ENCODE measurements at regions of chr3 and their contacts with region 1.

Region 1: DNA sequence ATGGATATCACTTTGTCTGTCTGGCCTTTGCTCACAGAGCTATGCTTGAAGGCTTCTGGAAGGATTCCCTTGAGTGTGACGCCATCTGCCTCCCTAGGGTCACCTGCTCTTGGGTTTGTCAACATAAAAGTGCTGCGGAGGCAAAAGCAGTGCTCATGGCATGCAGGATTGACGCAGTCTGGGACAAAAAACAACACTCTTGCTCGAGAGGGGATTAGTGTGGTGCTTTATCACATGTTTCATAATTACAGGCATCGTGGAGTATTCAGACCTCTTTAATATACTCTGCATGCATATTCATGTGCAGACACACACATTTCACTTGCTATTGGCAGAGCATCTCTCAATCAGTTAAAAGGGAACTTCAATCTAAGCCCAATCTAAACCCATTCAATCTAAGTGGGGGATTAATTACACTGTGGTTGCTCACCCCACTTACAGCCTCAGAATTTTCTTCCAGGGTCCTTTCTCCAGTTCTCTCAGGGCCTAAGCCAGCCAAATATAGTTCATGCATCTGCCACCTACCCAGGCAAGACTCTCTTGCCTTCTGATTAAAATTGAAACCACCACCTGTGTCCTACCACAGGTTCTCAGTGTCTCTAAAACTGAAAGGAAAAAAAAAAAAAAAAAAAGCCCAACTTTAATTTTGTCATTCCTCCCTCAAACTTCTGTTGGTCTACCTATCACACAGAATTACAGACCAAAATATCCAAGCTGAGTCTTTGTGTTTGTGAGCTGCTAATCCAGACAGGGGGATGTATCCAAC is 75.6 kb downstream of the BFSP2 start:
- DNase-seq: peak; percentile 37
- H3K4me3 Mint-ChIP-seq: peak overlapping the region; percentile 4
- H3K27ac Mint-ChIP-seq: peak overlapping the region; percentile 34
- H3K4me1 Mint-ChIP-seq: peaks cover 53% of the 10 kb centered on the region
- H3K27me3 Mint-ChIP-seq: no peaks in the 10 kb centered on the region

Region 2: GRCh38 chr3:133464573-133464972 is 10.9 kb before region 1 on chr3:
- intact Hi-C with region 1: loop called (anchors 2 kb)
- DNase-seq: no peak
- H3K4me3 Mint-ChIP-seq: no peak overlapping the region
- H3K27ac Mint-ChIP-seq: no peak overlapping the region
- H3K4me1 Mint-ChIP-seq: peaks cover 49% of the 10 kb centered on the region
- H3K27me3 Mint-ChIP-seq: no peaks in the 10 kb centered on the region

Region 3: DNA sequence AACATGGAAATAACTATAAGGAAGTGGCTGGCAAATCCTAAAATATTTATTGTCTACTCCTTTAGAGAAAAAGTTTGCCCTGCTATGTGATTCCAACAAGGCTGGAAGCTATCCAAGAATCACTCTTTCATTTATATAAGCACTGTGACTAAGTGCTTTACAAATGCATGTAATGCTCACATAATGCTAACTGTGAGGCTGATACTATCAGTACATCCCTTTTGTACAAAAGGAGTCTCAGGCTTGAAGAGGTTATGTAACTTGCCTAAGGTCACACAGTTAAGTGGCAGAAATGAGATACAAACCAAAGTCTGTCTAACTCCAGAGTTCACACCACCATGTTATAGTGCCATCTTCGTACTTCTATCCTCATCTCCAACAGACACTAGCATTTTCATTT is 169.3 kb after region 1 on chr3:
- intact Hi-C with region 1: no loop called
- DNase-seq: no peak
- H3K4me3 Mint-ChIP-seq: no peak overlapping the region
- H3K27ac Mint-ChIP-seq: no peak overlapping the region
- H3K4me1 Mint-ChIP-seq: peaks cover 18% of the 10 kb centered on the region
- H3K27me3 Mint-ChIP-seq: no peaks in the 10 kb centered on the region

Measured in activated T-helper 2 cell treated with anti-CD3 and anti-CD28 coated beads, Interferon-gamma antibody, Interleukin-2, Interleukin-4, amounts not matched to agents 10 μg/mL and 5 μg/mL and 100 μg/mL, durations not matched to agents 14 hours and 24 hours and 36 hours (primary cell).